ENCODE measurements at regions of chr1 and their contacts with region 1.

Region 1: GRCh38 chr1:79353224-79353623 is 346.7 kb upstream of the ADGRL4 start:
- DNase-seq: no peak
- H3K4me3 Mint-ChIP-seq: no peak overlapping the region
- H3K27ac Mint-ChIP-seq: no peak overlapping the region
- H3K4me1 Mint-ChIP-seq: no peaks in the 10 kb centered on the region
- H3K27me3 Mint-ChIP-seq: no peaks in the 10 kb centered on the region

Region 2: DNA sequence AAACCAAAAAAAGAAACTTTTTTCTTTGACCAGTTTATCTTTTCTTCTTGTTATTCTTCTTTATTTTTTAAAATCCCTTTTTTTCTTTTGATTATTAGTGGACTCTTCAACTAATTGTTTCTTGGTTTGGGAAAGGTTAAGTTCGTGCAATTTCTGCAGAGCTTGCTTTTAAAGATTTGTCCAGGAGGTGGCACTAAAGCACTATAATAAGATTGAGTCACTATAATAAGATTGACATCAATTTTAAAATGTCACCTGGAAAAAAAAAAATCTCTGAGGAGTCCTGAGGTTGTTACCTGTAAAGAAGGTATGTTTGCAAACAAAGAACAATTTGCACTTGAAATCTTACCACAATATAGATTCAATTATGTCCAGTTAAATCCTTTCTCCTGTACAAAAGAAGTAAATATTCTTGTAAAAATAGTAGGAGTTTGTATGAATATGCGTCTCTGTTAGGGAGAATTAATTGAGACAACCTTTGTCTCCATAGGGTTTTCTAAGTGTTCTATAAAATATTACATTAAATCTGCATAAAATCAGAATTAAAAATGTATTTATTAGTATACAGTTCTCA is 513.4 kb before region 1 on chr1:
- CTCF ChIA-PET with region 1: interaction called, 15 read pairs
- POLR2A ChIA-PET with region 1: no interaction called
- intact Hi-C with region 1: loop called (anchors 1 kb)
- DNase-seq: no peak
- H3K4me3 Mint-ChIP-seq: no peak overlapping the region
- H3K27ac Mint-ChIP-seq: no peak overlapping the region
- H3K4me1 Mint-ChIP-seq: peaks cover 10% of the 10 kb centered on the region
- H3K27me3 Mint-ChIP-seq: no peaks in the 10 kb centered on the region

Measured in activated CD4-positive, alpha-beta memory T cell treated with anti-CD3 and anti-CD28 coated beads for 36 hours (primary cell).